K562 (cell line): ENCODE measurements at regions of chr1 and their contacts with region 1.

Region 1: DNA sequence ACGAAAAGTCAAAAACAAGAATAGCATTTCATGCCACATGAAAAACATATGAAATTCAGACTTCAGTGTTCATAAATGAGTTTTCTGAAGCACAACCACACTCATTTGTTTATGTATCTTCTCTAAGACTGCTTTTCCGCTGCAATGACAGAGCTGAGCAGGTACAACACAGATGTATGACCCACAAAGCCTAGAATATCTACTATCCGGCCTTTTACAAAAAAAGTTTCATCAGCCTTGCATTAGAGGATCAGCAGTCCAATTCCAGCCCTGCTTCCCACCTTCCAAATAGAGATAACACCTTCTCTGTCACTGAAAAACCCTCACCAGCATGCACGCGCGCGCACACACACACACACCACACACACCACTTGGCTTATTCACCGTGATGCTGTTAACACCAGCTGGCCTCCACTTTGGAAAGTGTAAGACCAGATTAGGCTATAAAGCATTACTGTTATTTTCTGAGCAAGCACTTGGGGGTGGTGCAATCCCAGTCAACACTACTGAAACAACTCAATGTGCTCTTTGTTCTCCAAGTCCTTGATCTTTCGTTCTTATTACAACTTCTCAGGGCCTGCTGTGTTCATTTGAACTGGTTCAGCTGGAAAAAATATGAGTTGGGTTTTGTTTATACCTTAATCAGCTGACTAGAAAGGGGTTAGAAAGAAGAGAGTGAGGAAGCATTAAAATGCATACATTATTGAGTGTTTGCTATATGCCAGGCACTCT is 90.0 kb downstream of the GLUL start:
- DNase-seq: peak; percentile 53 to 87 (median 62)
- ATAC-seq: peak; percentile 76
- H3K4me3 ChIP-seq: no peak overlapping the region
- H3K27ac ChIP-seq: peak overlapping the region; percentile 95
- H3K4me1 ChIP-seq: peaks cover 37 to 61% of the 10 kb centered on the region in 2 experiments
- H3K27me3 ChIP-seq: no peaks in the 10 kb centered on the region
- CTCF ChIP-seq: peak; percentile 62 to 85 (median 65)
- EP300 ChIP-seq: peak; percentile 69
- POLR2A ChIP-seq: no peak
- RAD21 ChIP-seq: peak; percentile 93 to 98

Region 2: DNA sequence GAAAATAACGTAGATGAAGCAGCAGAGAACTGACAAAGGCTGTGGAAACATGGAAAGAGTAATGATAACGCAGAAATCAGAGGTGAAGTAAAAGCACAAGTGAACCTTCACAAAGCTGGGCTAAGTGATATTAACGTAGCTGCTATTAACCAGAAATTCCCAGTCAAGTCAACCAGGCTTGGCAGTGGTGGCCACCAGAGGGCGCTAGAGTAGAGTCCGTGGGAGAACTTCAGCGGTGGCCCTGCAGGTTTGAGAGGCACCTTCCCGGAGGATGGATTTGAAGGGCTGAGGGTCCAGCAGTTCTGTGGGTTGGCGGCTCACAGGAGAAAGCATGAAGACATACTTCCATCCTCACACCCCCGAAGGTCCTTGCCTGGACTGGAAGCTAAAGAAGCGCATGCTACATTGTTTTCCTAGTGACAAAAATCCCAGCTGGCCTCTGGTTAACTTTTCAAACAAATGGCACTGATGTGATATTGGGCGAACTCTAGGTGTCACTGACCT is 158.4 kb before region 1 on chr1:
- CTCF ChIA-PET with region 1: no interaction called
- POLR2A ChIA-PET with region 1: interaction called, 3 read pairs
- in situ Hi-C with region 1: loop called (anchors 5 kb)
- intact Hi-C with region 1: loop called (anchors 1 kb)
- DNase-seq: peak; percentile 83 to 93 (median 88)
- ATAC-seq: peak; percentile 92
- H3K4me3 ChIP-seq: no peak overlapping the region
- H3K27ac ChIP-seq: no peak overlapping the region
- H3K4me1 ChIP-seq: peaks cover 12% of the 10 kb centered on the region in 2 experiments
- H3K27me3 ChIP-seq: peaks cover 0 to 4% of the 10 kb centered on the region in 2 experiments; a peak in 2 of 5 replicates
- CTCF ChIP-seq: peak; percentile 97 to 99 (median 98)
- EP300 ChIP-seq: peak; percentile 25; the same call in 1 of the 2 replicates
- POLR2A ChIP-seq: no peak
- RAD21 ChIP-seq: peak; percentile 96 to 100

Region 3: DNA sequence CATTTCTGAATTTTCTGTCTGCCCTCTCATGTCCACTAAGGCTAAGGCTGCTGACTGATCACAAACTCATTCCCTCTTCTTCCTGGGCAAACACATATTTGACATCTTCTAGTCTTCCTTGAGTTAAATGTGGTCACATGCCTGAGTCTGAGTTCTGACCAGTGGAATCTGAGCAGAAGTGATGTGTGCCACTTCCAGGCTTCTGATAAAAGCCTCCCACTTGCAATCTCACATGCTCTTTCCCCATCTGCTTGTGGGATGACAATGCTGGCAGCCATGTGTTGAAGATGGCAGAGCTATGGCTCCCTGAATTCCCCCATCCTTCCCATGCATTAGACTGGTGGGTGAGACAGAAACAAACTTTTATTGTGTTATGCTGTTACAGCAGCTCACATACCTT is 90.2 kb before region 1 on chr1:
- CTCF ChIA-PET with region 1: no interaction called
- POLR2A ChIA-PET with region 1: no interaction called
- in situ Hi-C with region 1: no loop called
- intact Hi-C with region 1: no loop called
- DNase-seq: no peak
- ATAC-seq: no peak
- H3K4me3 ChIP-seq: no peak overlapping the region
- H3K27ac ChIP-seq: no peak overlapping the region
- H3K4me1 ChIP-seq: peaks cover 4 to 8% of the 10 kb centered on the region in 2 experiments; a peak in 2 of 5 replicates
- H3K27me3 ChIP-seq: no peaks in the 10 kb centered on the region
- CTCF ChIP-seq: no peak
- EP300 ChIP-seq: no peak
- POLR2A ChIP-seq: no peak
- RAD21 ChIP-seq: no peak

Region 4: DNA sequence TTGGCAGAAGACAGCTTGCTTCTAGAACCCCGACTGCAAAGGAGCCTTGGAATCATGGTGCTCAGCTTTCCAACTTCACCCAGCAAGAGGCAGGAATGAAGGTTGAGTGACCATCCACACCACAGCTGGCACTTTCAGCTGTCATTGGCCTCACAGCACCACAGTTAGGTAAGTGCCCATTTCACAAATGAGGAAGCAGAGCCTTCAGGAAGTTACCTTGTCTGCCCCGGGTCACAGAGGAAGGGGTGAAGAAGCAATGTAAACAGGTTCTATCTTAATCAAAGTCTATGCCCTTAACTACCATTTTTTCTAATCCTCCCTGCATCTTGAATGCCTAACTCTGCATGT is 66.1 kb before region 1 on chr1:
- CTCF ChIA-PET with region 1: no interaction called
- POLR2A ChIA-PET with region 1: interaction called, 10 read pairs
- in situ Hi-C with region 1: no loop called
- intact Hi-C with region 1: no loop called
- DNase-seq: no peak
- ATAC-seq: peak; percentile 5; the same call in 2 of the 3 replicates
- H3K4me3 ChIP-seq: no peak overlapping the region
- H3K27ac ChIP-seq: peak overlapping the region; percentile 56; the same call in 1 of the 3 replicates
- H3K4me1 ChIP-seq: peaks cover 18 to 23% of the 10 kb centered on the region in 2 experiments
- H3K27me3 ChIP-seq: no peaks in the 10 kb centered on the region
- CTCF ChIP-seq: no peak
- EP300 ChIP-seq: no peak
- POLR2A ChIP-seq: no peak
- RAD21 ChIP-seq: no peak

Region 5: DNA sequence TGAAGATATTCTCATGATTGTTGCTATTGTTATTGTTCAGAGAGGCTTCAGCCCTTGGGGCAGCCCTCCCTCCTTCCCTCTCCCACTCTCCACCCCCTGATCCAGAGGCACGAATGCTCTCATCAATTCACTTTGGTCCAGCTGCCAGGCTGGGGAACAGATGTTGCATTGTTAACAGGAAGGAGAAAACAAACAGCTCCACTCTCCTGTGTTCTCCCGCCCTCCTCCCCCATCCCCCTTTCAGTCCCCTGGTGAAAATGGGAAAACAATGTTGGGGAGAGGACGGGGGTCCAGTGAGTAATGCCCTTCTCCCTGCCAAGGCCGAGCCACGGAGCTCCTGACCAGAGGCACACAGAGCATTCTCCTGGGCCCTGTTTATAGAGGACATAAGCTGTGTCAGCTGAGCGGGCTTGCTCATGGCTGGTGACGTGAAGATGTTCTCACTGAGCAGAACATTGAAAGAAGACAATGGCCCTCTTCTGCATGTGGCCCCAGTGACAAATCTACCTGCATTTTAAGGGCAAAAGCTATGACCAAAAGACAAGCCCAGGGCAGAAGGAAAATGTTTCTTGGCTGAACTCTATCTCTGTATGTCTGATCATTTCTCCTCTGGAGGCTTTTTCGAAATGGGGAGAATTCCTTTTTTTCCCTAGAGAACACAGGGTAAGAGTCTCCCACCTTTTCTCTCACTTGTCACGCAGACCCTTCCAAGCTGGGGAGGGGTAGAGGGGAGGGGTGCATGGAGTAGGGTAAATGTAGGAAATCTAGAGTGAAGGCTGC is 21.7 kb before region 1 on chr1:
- CTCF ChIA-PET with region 1: no interaction called
- POLR2A ChIA-PET with region 1: interaction called, 13 read pairs
- in situ Hi-C with region 1: no loop called
- intact Hi-C with region 1: no loop called
- DNase-seq: no peak
- ATAC-seq: peak; percentile 24; the same call in 2 of the 3 replicates
- H3K4me3 ChIP-seq: no peak overlapping the region
- H3K27ac ChIP-seq: no peak overlapping the region
- H3K4me1 ChIP-seq: peaks cover 3% of the 10 kb centered on the region in 2 experiments; a peak in 3 of 5 replicates
- H3K27me3 ChIP-seq: no peaks in the 10 kb centered on the region
- CTCF ChIP-seq: no peak
- EP300 ChIP-seq: no peak
- POLR2A ChIP-seq: no peak
- RAD21 ChIP-seq: no peak

Region 6: DNA sequence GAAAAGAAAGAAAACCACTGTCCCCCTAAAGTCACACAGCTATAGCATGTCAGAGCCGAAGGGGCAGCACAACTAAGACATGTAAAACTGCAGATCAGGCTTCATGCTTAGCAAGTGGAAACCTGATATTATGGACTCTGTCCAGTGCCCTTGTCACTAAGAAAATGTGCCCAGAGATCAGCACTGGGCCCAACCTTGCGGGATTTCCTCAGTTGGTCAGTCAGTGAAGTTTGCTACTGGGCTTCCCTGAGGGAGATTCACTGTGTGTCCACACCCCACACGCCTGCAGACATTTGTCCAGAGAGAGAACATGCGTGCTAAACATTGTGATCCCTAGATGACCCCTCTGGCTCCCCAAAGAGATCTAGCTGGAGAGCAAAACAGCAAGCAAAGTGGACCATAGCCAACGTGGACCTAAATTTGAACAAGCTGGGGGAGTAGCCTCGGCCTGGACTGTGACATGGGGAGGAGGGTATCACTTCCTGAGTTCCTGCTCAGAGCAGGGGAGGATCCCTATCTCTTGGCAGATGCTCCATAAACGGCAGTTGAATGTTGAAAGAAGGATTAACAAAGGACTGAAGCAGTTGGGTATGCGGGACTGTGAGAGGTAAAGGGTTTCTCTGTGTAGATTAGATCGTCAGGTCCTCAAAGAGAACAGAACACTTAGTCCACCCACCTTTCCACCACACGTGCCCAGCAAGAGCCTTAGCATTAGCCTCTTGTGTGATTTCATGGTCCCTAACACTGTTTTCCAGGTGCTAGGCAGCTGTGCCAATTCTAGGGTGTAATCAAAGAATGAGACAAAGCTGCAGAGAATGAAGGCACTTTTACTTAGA is 36.3 kb after region 1 on chr1:
- CTCF ChIA-PET with region 1: no interaction called
- POLR2A ChIA-PET with region 1: interaction called, 8 read pairs
- in situ Hi-C with region 1: no loop called
- intact Hi-C with region 1: loop called (anchors 1 kb)
- DNase-seq: peak; percentile 87 to 93 (median 90)
- ATAC-seq: peak; percentile 80
- H3K4me3 ChIP-seq: no peak overlapping the region
- H3K27ac ChIP-seq: peak overlapping the region; percentile 83
- H3K4me1 ChIP-seq: peaks cover 36 to 65% of the 10 kb centered on the region in 2 experiments
- H3K27me3 ChIP-seq: no peaks in the 10 kb centered on the region
- CTCF ChIP-seq: no peak
- EP300 ChIP-seq: peak; percentile 100
- POLR2A ChIP-seq: no peak; the same call in 1 of the 2 replicates
- RAD21 ChIP-seq: peak; percentile 15 to 48; a peak in 3 of 4 replicates

Region 7: GRCh38 chr1:182397771-182398393 is 96.2 kb after region 1 on chr1:
- CTCF ChIA-PET with region 1: interaction called, 7 read pairs
- POLR2A ChIA-PET with region 1: interaction called, 6 read pairs
- in situ Hi-C with region 1: loop called (anchors 5 kb)
- intact Hi-C with region 1: loop called (anchors 1 kb)
- DNase-seq: no peak
- ATAC-seq: no peak
- H3K4me3 ChIP-seq: no peak overlapping the region
- H3K27ac ChIP-seq: no peak overlapping the region
- H3K4me1 ChIP-seq: peaks cover 0 to 22% of the 10 kb centered on the region in 2 experiments; a peak in 3 of 5 replicates
- H3K27me3 ChIP-seq: no peaks in the 10 kb centered on the region
- CTCF ChIP-seq: no peak
- EP300 ChIP-seq: no peak
- POLR2A ChIP-seq: no peak
- RAD21 ChIP-seq: no peak

Region 8: GRCh38 chr1:182588500-182589452 is 287.1 kb after region 1 on chr1 and contains the start of gene RNASEL:
- CTCF ChIA-PET with region 1: no interaction called
- POLR2A ChIA-PET with region 1: no interaction called
- in situ Hi-C with region 1: loop called (anchors 10 kb)
- intact Hi-C with region 1: loop called (anchors 10 kb)
- DNase-seq: peak; percentile 77 to 86 (median 82)
- ATAC-seq: peak; percentile 92
- H3K4me3 ChIP-seq: peak within 1 kb of the TSS; percentile 58
- H3K27ac ChIP-seq: peak within 1 kb of the TSS; percentile 83
- H3K4me1 ChIP-seq: peaks cover 0 to 42% of the 10 kb centered on the region in 2 experiments; a peak in 4 of 5 replicates
- H3K27me3 ChIP-seq: peaks cover 0 to 4% of the 10 kb centered on the region in 2 experiments; a peak in 1 of 5 replicates
- CTCF ChIP-seq: no peak
- EP300 ChIP-seq: peak; percentile 31
- POLR2A ChIP-seq: peak; percentile 90
- RAD21 ChIP-seq: peak in 1 of 2 experiments; percentile 25; a peak in 2 of 4 replicates
- polyA plus RNA-seq, gene RNASEL: 4.3 to 11.1 TPM